A673 (cell line): ENCODE measurements at regions of chr13 and their contacts with region 1.

Region 1: DNA sequence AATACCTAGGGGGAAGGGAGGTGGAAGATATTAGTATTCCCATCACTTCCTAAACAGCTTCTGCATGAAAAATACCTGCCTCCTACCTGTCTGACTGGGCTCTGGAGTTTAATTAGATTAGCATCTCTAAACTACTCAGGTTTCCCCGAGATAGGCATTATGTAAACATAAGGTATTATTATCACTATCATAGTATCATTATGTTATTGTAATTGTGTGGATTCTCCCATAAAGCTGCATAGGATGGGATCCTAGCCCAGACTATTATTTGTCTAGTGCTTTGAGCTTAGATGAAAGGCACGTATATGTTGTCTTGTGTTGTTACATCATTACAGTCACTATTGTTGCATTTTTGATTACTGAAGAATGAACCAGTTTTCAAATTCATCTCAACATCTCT is 115.2 kb upstream of the SOX21 start:
- DNase-seq: no peak
- H3K4me3 ChIP-seq: no peak overlapping the region
- H3K27ac ChIP-seq: no peak overlapping the region
- H3K4me1 ChIP-seq: no peaks in the 10 kb centered on the region
- H3K27me3 ChIP-seq: no peaks in the 10 kb centered on the region
- CTCF ChIP-seq: no peak

Region 2: GRCh38 chr13:95050800-95051615 is 223.4 kb after region 1 on chr13:
- CTCF ChIA-PET with region 1: no interaction called
- POLR2A ChIA-PET with region 1: no interaction called
- intact Hi-C with region 1: no loop called
- DNase-seq: no peak
- H3K4me3 ChIP-seq: no peak overlapping the region
- H3K27ac ChIP-seq: no peak overlapping the region
- H3K4me1 ChIP-seq: no peaks in the 10 kb centered on the region
- H3K27me3 ChIP-seq: no peaks in the 10 kb centered on the region
- CTCF ChIP-seq: no peak

Region 3: DNA sequence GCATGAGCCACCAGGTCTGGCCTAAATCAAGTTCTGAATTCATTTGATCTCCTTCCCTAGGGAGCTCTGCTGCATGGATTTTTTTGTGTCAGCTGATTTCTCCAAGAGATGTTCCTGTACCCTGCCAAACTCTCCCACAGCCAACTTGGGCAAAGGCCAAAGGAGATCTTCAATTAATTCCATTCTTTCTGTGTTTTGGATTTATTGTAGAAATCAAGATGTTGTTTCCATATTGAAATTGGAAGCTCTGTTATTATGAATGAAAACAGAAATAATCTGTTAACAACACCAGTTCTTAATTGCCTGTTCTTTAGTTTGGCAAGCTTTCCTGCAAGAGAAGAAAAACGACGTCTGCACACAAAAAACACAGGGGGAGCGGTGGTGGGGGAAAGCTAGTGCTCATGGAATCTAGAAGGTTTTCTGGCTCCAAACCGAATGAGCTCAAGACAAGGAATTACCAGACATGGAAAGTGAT is 560.2 kb after region 1 on chr13:
- CTCF ChIA-PET with region 1: no interaction called
- POLR2A ChIA-PET with region 1: no interaction called
- intact Hi-C with region 1: no loop called
- DNase-seq: peak; percentile 39
- H3K4me3 ChIP-seq: no peak overlapping the region
- H3K27ac ChIP-seq: no peak overlapping the region
- H3K4me1 ChIP-seq: peaks cover 8% of the 10 kb centered on the region
- H3K27me3 ChIP-seq: no peaks in the 10 kb centered on the region
- CTCF ChIP-seq: no peak

Region 4: GRCh38 chr13:96243371-96243770 is 1415.8 kb after region 1 on chr13:
- CTCF ChIA-PET with region 1: no interaction called
- POLR2A ChIA-PET with region 1: interaction called, 21 read pairs
- intact Hi-C with region 1: no loop called
- DNase-seq: no peak
- H3K4me3 ChIP-seq: no peak overlapping the region
- H3K27ac ChIP-seq: no peak overlapping the region
- H3K4me1 ChIP-seq: no peaks in the 10 kb centered on the region
- H3K27me3 ChIP-seq: no peaks in the 10 kb centered on the region
- CTCF ChIP-seq: no peak